ENCODE measurements at regions of chr5 and their contacts with region 1.

Region 1: DNA sequence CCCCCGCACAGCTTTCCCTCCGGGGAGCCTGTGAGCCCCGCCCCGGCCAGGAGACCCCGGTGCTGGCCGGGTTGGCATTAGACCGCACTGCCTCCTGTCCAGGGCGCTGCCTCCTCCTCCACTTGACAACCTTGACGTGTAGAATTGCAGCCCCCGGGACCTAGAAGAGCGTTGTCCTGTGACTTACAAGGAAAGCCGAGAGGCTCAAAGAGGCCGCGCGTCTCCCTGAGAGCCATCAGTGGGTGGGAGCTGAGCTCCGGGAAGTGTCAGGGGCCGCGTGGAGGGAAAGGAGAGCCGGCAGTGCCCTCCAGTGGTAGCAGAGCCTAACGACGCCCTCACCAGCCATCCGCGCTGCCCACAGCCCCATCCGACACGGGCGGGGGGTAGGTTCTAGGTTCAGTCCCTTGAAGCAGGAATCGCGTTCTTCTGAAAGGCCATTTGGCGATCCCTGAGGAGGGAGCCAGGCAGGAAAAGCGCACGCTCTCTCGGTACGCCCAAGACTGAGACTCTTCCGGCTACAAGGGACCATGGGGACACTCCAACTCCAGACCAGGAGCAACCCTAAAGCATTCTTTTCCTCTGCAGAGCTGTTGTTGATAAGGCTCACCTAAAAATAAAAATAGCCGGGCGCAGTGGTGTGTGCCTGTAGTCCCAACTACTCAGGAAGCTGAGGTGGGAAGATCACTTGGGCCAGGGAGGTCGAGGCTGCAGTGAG is 40.6 kb upstream of the SAP30L start:
- DNase-seq: peak; percentile 89
- ATAC-seq: peak; percentile 100
- H3K4me3 Mint-ChIP-seq: peak overlapping the region; percentile 39
- H3K27ac Mint-ChIP-seq: peak overlapping the region; percentile 60
- H3K4me1 Mint-ChIP-seq: peaks cover 8% of the 10 kb centered on the region
- H3K27me3 Mint-ChIP-seq: no peaks in the 10 kb centered on the region

Region 2: GRCh38 chr5:153974131-153974812 is 431.0 kb before region 1 on chr5:
- CTCF ChIA-PET with region 1: interaction called, 31 read pairs
- POLR2A ChIA-PET with region 1: no interaction called
- intact Hi-C with region 1: loop called (anchors 1 to 5 kb)
- DNase-seq: peak; percentile 50
- ATAC-seq: peak; percentile 55
- H3K4me3 Mint-ChIP-seq: no peak overlapping the region
- H3K27ac Mint-ChIP-seq: no peak overlapping the region
- H3K4me1 Mint-ChIP-seq: no peaks in the 10 kb centered on the region
- H3K27me3 Mint-ChIP-seq: no peaks in the 10 kb centered on the region

Region 3: DNA sequence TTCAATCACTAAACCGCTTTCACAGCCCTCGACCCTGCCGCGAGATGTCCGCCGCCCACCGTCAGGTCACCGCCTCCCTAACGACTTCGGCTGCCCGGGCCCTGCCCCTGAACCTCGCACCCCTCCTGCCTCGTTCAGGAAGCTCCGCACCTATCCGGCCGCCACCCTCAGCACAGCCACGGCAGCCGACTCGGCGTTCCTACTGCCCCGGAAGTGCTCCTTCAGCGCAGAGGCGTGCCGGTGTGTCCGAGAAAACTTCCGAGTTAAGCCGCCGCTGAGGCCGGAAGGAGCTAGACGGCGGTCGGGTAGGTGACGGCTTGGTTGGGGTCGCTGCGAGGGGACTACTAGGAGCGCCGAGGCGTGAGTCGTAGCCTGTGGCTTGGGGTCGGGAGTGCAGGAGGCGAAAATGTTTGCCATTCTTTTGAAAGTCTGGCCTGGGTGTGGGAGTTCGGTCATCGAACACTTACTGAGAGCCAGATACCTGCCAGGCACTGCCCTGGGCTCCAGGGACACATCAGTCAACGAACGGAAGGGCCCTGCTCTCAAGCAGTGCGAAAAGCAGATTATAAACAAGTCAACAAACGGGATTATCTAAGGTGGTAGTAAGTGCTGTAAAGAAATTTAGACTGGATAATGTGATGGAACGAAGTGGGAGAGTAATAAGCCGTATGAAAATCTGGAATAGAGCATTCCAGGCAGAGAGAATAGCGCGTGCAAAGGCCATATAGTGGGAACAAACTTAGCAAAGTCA is 366.4 kb before region 1 on chr5 and contains the starts of genes FAM114A2 and MFAP3:
- CTCF ChIA-PET with region 1: interaction called, 7 read pairs
- POLR2A ChIA-PET with region 1: no interaction called
- intact Hi-C with region 1: loop called in 1 of 2 experiments (anchors 1 kb)
- DNase-seq: peak; percentile 94
- ATAC-seq: peak; percentile 99
- H3K4me3 Mint-ChIP-seq: peak within 1 kb of the TSS; percentile 100
- H3K27ac Mint-ChIP-seq: peak within 1 kb of the TSS; percentile 92
- H3K4me1 Mint-ChIP-seq: peaks cover 55% of the 10 kb centered on the region
- H3K27me3 Mint-ChIP-seq: no peaks in the 10 kb centered on the region
- total RNA-seq, gene FAM114A2: 27.9 to 28.5 TPM
- total RNA-seq, gene MFAP3: 13.2 to 13.5 TPM

Region 4: DNA sequence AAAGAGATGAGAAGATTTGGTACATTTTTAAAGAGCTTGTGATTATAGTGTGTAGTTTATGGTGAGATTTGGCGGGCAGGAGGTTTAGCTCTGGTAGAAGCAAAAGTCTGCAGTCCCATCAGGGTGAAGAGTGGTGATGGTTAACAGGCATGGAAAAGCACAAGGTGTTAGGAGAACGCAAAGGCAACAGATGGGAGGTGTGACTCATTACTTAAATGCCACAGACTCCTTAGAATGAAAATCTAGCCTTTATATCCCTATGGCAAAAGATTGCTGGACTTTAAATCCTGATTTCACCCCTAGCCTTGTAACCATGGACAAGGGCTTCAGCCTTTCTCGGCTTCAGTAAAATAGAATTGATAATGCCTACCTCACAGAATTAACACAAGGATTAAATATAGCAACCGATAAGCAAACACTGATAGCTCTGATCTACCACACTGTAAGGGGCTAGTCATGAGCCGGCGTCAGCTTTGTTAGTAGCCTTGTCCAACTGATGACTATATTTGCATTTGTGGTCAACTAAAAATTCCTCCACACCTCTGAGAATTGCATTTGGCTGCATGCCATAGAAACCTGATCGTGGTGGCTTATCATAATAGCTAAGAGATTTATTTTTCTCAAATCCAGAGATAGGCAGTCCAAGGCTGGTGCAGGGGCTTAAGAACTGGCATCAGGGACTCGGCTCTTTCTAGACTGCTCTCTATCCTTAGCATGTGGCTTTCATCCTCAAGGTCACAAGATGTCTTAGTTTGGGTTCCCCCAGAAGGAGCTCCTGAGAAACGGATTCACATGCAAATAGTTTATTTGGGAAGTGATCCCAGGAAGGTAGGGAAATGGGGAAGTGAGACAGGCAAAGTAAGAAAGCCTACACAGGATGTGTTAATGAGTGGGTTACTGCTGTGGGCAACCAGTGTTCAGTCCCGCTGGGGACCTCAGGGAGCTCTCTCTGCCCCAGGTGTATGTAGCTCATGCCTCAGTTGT is 346.9 kb before region 1 on chr5:
- CTCF ChIA-PET with region 1: interaction called, 11 read pairs
- POLR2A ChIA-PET with region 1: no interaction called
- intact Hi-C with region 1: no loop called
- DNase-seq: no peak
- ATAC-seq: no peak
- H3K4me3 Mint-ChIP-seq: no peak overlapping the region
- H3K27ac Mint-ChIP-seq: no peak overlapping the region
- H3K4me1 Mint-ChIP-seq: peaks cover 4% of the 10 kb centered on the region
- H3K27me3 Mint-ChIP-seq: no peaks in the 10 kb centered on the region

Region 5: GRCh38 chr5:154179846-154180710 is 225.2 kb before region 1 on chr5:
- CTCF ChIA-PET with region 1: interaction called, 5 read pairs
- POLR2A ChIA-PET with region 1: no interaction called
- intact Hi-C with region 1: loop called (anchors 2 to 5 kb)
- DNase-seq: peak; percentile 46
- ATAC-seq: peak; percentile 98
- H3K4me3 Mint-ChIP-seq: no peak overlapping the region
- H3K27ac Mint-ChIP-seq: no peak overlapping the region
- H3K4me1 Mint-ChIP-seq: no peaks in the 10 kb centered on the region
- H3K27me3 Mint-ChIP-seq: peaks cover 7% of the 10 kb centered on the region

Region 6: GRCh38 chr5:154196955-154197652 is 208.1 kb before region 1 on chr5:
- CTCF ChIA-PET with region 1: interaction called, 17 read pairs
- POLR2A ChIA-PET with region 1: interaction called, 4 read pairs
- intact Hi-C with region 1: loop called (anchors 1 to 5 kb)
- DNase-seq: peak; percentile 35
- ATAC-seq: no peak
- H3K4me3 Mint-ChIP-seq: peak overlapping the region; percentile 35
- H3K27ac Mint-ChIP-seq: peak overlapping the region; percentile 90
- H3K4me1 Mint-ChIP-seq: peaks cover 71% of the 10 kb centered on the region
- H3K27me3 Mint-ChIP-seq: no peaks in the 10 kb centered on the region

Region 7: DNA sequence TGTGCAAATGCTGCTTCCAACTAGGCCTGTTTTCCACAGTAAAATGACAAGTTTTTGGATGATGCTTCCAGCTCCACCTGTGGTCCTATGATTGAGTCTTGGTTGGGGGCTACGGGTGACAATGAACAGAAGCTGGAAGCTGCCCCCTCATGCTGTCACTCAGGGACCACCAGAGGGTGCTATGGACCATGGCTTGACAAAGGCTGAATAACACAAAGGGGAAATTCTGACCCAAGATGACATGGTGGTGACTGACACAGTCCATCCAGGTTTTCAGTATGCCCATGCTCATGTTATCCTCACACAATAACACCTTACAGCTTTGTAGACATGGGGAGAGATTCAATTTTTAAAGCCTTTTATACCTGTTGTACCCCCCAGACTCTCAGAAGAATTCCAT is 16.6 kb after region 1 on chr5:
- CTCF ChIA-PET with region 1: interaction called, 14 read pairs
- POLR2A ChIA-PET with region 1: no interaction called
- intact Hi-C with region 1: no loop called
- DNase-seq: peak; percentile 33
- ATAC-seq: no peak
- H3K4me3 Mint-ChIP-seq: no peak overlapping the region
- H3K27ac Mint-ChIP-seq: no peak overlapping the region
- H3K4me1 Mint-ChIP-seq: peaks cover 2% of the 10 kb centered on the region
- H3K27me3 Mint-ChIP-seq: no peaks in the 10 kb centered on the region

Measured in activated CD4-positive, alpha-beta T cell treated with anti-CD3 and anti-CD28 coated beads for 36 hours (primary cell).